ENCODE measurements at regions of chr16 and their contacts with region 1.

Region 1: DNA sequence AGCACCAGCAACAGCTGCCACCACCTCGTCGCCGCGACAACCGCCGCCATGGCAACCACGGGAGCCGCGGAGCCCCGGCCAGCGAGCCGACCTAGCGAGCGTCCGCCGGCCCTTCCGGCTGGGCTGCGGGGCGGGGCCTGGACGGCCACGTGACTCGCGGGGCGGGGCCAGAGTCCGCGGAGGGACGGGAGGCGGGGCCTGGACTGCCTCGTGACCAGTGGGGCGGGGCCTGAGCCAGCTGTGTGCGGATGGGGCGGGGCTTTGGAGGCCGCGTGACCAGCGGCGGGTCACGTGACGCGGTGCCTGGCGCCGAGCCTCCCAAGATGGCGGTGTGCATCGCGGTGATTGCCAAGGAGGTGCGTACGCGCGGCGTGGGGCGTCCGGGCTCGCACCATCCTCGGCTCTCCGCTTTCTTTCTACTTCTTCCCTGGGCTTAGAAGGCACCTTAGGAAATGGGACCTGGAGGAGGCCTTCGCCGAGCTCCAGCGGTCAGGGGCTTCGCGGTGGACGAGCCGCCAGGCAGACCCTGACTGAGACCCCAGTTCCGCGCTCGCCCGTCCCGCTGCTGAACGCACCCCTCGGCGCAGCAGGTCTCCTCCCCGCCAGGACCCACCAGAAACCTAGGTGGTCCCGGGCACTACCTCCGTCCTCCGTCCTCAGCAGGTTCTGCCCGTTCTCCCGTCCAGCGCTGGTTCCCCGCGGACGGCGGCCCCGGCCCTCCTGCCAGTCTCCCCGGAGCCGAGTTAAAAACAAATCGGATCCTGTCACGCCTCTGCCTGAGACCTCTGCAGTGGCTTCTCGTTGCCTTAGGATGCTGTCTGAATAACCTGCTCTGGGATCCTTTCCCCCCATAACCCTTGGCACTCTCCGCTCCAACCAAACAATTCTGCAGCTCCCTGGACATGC is at the starts of genes GALNS and TRAPPC2L:
- DNase-seq: peak; percentile 99
- H3K4me3 ChIP-seq: peak within 1 kb of the TSS; percentile 82
- H3K27ac ChIP-seq: peak within 1 kb of the TSS; percentile 49
- H3K4me1 ChIP-seq: peaks cover 12% of the 10 kb centered on the region
- H3K27me3 ChIP-seq: no peaks in the 10 kb centered on the region
- CTCF ChIP-seq: no peak
- total RNA-seq, gene GALNS: 22.8 to 44.5 TPM
- total RNA-seq, gene TRAPPC2L: 33.8 to 57.3 TPM

Region 2: GRCh38 chr16:88452482-88453216 is 404.4 kb before region 1 on chr16:
- intact Hi-C with region 1: loop called (anchors 10 kb)
- DNase-seq: peak; percentile 98
- H3K4me3 ChIP-seq: peak overlapping the region; percentile 31
- H3K27ac ChIP-seq: peak overlapping the region; percentile 31
- H3K4me1 ChIP-seq: peaks cover 9% of the 10 kb centered on the region
- H3K27me3 ChIP-seq: no peaks in the 10 kb centered on the region
- CTCF ChIP-seq: no peak

Region 3: GRCh38 chr16:88811769-88812512 is 45.1 kb before region 1 on chr16 and contains the start of gene APRT:
- intact Hi-C with region 1: loop called (anchors 5 kb)
- DNase-seq: peak; percentile 96
- H3K4me3 ChIP-seq: peak within 1 kb of the TSS; percentile 75
- H3K27ac ChIP-seq: peak within 1 kb of the TSS; percentile 96
- H3K4me1 ChIP-seq: peaks cover 11% of the 10 kb centered on the region
- H3K27me3 ChIP-seq: no peaks in the 10 kb centered on the region
- CTCF ChIP-seq: no peak
- total RNA-seq, gene APRT: 103 to 273 TPM

Region 4: GRCh38 chr16:89217388-89218191 is 360.5 kb after region 1 on chr16 and contains the start of gene ZNF778:
- intact Hi-C with region 1: loop called (anchors 10 kb)
- DNase-seq: peak; percentile 86
- H3K4me3 ChIP-seq: peak within 1 kb of the TSS; percentile 87
- H3K27ac ChIP-seq: peak within 1 kb of the TSS; percentile 92
- H3K4me1 ChIP-seq: peaks cover 3% of the 10 kb centered on the region
- H3K27me3 ChIP-seq: no peaks in the 10 kb centered on the region
- CTCF ChIP-seq: no peak
- total RNA-seq, gene ZNF778: 3.9 to 6.4 TPM